ENCODE measurements at regions of chr5 and their contacts with region 1.

Region 1: GRCh38 chr5:66807743-66808142 is 211.6 kb downstream of the MAST4 start:
- DNase-seq: peak; percentile 66 to 73
- ATAC-seq: peak; percentile 98
- H3K4me3 ChIP-seq: no peak overlapping the region
- H3K27ac ChIP-seq: peak overlapping the region in 1 of 2 experiments; percentile 65; a peak in 4 of 6 replicates
- H3K4me1 ChIP-seq: peaks cover 5% of the 10 kb centered on the region
- CTCF ChIP-seq: peak; percentile 78
- EP300 ChIP-seq: no peak
- POLR2A ChIP-seq: no peak
- RAD21 ChIP-seq: peak; percentile 87 to 88

Region 2: GRCh38 chr5:66742083-66742895 is 65.5 kb before region 1 on chr5:
- CTCF ChIA-PET with region 1: no interaction called
- POLR2A ChIA-PET with region 1: no interaction called
- DNase-seq: peak; percentile 25 to 61
- ATAC-seq: peak; percentile 82 to 94; a peak in 5 of 6 replicates
- H3K4me3 ChIP-seq: no peak overlapping the region
- H3K27ac ChIP-seq: no peak overlapping the region
- H3K4me1 ChIP-seq: 0 out of 3 replicates have a peak, but pooled peaks cover 2% of the 10 kb centered on the region
- CTCF ChIP-seq: peak; percentile 35
- EP300 ChIP-seq: no peak
- POLR2A ChIP-seq: no peak
- RAD21 ChIP-seq: peak; percentile 26 to 37; a peak in 4 of 5 replicates

Region 3: GRCh38 chr5:66821688-66822429 is 14.1 kb after region 1 on chr5:
- CTCF ChIA-PET with region 1: interaction called, 13 read pairs
- POLR2A ChIA-PET with region 1: no interaction called
- DNase-seq: no peak
- ATAC-seq: no peak; a peak in 1 of 6 replicates
- H3K4me3 ChIP-seq: no peak overlapping the region
- H3K27ac ChIP-seq: no peak overlapping the region
- H3K4me1 ChIP-seq: no peaks in the 10 kb centered on the region
- CTCF ChIP-seq: no peak
- EP300 ChIP-seq: no peak
- POLR2A ChIP-seq: no peak
- RAD21 ChIP-seq: no peak

Region 4: GRCh38 chr5:66849803-66850202 is 42.1 kb after region 1 on chr5:
- CTCF ChIA-PET with region 1: no interaction called
- POLR2A ChIA-PET with region 1: no interaction called
- DNase-seq: peak in 1 of 2 experiments; percentile 42
- ATAC-seq: peak; percentile 42 to 50; a peak in 4 of 6 replicates
- H3K4me3 ChIP-seq: no peak overlapping the region
- H3K27ac ChIP-seq: peak overlapping the region; percentile 64 to 84
- H3K4me1 ChIP-seq: peaks cover 24% of the 10 kb centered on the region
- CTCF ChIP-seq: no peak
- EP300 ChIP-seq: no peak
- POLR2A ChIP-seq: no peak
- RAD21 ChIP-seq: no peak

Region 5: GRCh38 chr5:66931651-66932050 is 123.9 kb after region 1 on chr5:
- CTCF ChIA-PET with region 1: interaction called, 10 read pairs
- POLR2A ChIA-PET with region 1: no interaction called
- DNase-seq: no peak
- ATAC-seq: no peak
- H3K4me3 ChIP-seq: no peak overlapping the region
- H3K27ac ChIP-seq: no peak overlapping the region
- H3K4me1 ChIP-seq: no peaks in the 10 kb centered on the region
- CTCF ChIP-seq: no peak
- EP300 ChIP-seq: no peak
- POLR2A ChIP-seq: no peak
- RAD21 ChIP-seq: no peak

Region 6: DNA sequence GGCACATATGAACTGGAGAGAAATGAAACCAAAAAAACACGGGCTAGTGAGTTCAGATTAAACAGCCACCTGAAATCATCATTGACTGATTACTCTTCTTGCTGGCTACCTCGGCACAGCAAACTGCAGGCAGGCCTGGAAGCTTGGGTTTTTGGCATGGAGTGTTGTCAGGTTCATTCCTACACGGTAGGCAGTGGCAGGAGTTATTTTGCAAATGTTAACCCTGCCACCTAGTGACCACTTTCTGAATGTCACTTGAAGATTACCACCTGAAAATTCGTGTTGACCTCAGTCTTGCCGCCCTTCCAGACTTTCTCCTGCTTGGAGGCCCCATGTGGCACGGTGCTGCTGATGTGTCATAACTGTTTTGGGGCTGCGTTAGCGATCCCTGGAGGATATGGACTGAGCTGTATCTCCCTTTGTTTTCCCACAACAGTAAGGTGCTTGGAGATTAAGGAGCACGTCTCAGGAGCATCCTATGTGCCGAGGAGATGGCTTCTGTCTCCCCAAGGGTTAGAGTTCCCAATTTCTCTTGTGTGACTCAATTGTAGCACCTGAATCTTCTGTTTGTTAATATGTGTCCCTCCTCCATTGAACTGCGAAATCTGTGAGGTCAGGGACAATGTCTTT is 401.5 kb after region 1 on chr5:
- CTCF ChIA-PET with region 1: interaction called, 18 read pairs
- POLR2A ChIA-PET with region 1: no interaction called
- DNase-seq: peak; percentile 81 to 84
- ATAC-seq: peak; percentile 88 to 93
- H3K4me3 ChIP-seq: no peak overlapping the region
- H3K27ac ChIP-seq: peak overlapping the region; percentile 7 to 58; a peak in 4 of 6 replicates
- H3K4me1 ChIP-seq: peaks cover 33% of the 10 kb centered on the region
- CTCF ChIP-seq: peak; percentile 89
- EP300 ChIP-seq: no peak
- POLR2A ChIP-seq: no peak
- RAD21 ChIP-seq: peak; percentile 93 to 94

Measured in A549 (cell line).